ENCODE measurements at regions of chr13 and their contacts with region 1.

Region 1: GRCh38 chr13:94247890-94248289 is 231.6 kb downstream of the DCT start:
- DNase-seq: no peak
- ATAC-seq: no peak
- H3K4me3 ChIP-seq: no peak overlapping the region
- H3K27ac ChIP-seq: no peak overlapping the region
- H3K4me1 ChIP-seq: peaks cover 0 to 4% (median 0%) of the 10 kb centered on the region in 9 donors
- H3K27me3 ChIP-seq: no peaks in the 10 kb centered on the region
- CTCF ChIP-seq: no peak

Region 2: DNA sequence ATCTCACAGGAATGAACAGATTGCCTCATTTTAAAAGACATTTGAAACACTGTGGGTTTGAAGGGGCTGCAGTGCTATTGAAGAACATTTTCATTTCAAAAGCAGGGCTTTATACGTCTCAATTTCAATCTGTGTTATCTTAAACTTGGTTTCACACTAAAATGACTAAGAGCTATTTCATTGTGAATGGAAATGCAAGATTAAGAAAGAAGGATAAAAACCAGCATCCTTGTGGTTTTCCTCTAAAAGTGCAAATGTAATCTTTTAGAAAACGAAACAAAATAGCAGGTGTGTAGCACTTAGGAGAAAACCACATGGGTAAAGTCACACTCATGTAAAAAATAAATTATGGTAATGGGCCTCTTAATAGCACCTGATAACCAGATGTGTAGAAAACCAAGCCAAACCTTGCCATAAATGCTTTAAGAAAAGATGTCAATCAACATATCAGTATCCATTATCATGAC is 623.5 kb before region 1 on chr13:
- intact Hi-C with region 1: no loop called
- DNase-seq: no peak
- ATAC-seq: no peak
- H3K4me3 ChIP-seq: no peak overlapping the region
- H3K27ac ChIP-seq: no peak overlapping the region
- H3K4me1 ChIP-seq: no peaks in the 10 kb centered on the region
- H3K27me3 ChIP-seq: no peaks in the 10 kb centered on the region
- CTCF ChIP-seq: no peak

Region 3: GRCh38 chr13:93674337-93674755 is 573.5 kb before region 1 on chr13:
- intact Hi-C with region 1: no loop called
- DNase-seq: no peak
- ATAC-seq: no peak
- H3K4me3 ChIP-seq: no peak overlapping the region
- H3K27ac ChIP-seq: no peak overlapping the region
- H3K4me1 ChIP-seq: no peaks in the 10 kb centered on the region
- H3K27me3 ChIP-seq: no peaks in the 10 kb centered on the region
- CTCF ChIP-seq: no peak

Region 4: GRCh38 chr13:94259984-94260383 is 12.1 kb after region 1 on chr13:
- intact Hi-C with region 1: loop called in 1 of 10 experiments (anchors 1 kb)
- DNase-seq: no peak
- ATAC-seq: no peak
- H3K4me3 ChIP-seq: no peak overlapping the region
- H3K27ac ChIP-seq: no peak overlapping the region
- H3K4me1 ChIP-seq: no peaks in the 10 kb centered on the region
- H3K27me3 ChIP-seq: no peaks in the 10 kb centered on the region
- CTCF ChIP-seq: no peak

Region 5: GRCh38 chr13:94389604-94390351 is 141.9 kb after region 1 on chr13:
- intact Hi-C with region 1: no loop called
- DNase-seq: no peak
- ATAC-seq: no peak
- H3K4me3 ChIP-seq: no peak overlapping the region
- H3K27ac ChIP-seq: no peak overlapping the region
- H3K4me1 ChIP-seq: no peaks in the 10 kb centered on the region
- H3K27me3 ChIP-seq: no peaks in the 10 kb centered on the region
- CTCF ChIP-seq: no peak

Region 6: DNA sequence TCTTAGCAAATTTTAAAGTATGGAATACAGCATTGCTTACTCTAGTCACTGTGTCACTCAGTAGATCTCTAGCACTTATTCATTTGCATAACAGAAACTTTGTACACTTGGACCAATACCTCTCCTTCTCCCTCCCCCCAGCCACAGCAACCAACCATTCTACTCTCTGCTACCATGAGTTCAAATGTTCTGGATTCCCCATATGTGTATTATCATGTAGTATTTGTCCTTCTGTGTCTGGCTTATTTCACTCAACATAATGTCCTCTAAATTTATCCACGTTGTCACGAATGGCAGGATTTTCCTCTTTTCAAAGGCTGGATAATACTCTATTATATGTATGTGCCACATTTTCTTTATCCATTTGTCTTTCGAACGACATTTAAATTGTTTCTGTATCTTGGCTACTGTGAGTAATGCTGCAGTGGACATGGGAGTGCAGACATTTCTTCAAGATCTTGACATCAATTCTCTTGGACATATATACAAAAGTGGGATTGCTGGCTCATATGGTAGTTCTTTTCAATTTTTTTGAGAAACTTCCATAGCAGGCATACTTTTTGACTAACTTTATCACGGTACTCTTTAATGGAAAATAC is 648.9 kb after region 1 on chr13:
- intact Hi-C with region 1: no loop called
- DNase-seq: no peak
- ATAC-seq: no peak
- H3K4me3 ChIP-seq: no peak overlapping the region
- H3K27ac ChIP-seq: no peak overlapping the region
- H3K4me1 ChIP-seq: no peaks in the 10 kb centered on the region
- H3K27me3 ChIP-seq: no peaks in the 10 kb centered on the region
- CTCF ChIP-seq: no peak